ENCODE measurements at regions of chr20 and their contacts with region 1.

Region 1: GRCh38 chr20:20824924-20825584 is 112.6 kb upstream of the RALGAPA2 start:
- DNase-seq: peak; percentile 26
- H3K4me3 Mint-ChIP-seq: no peak overlapping the region
- H3K27ac Mint-ChIP-seq: no peak overlapping the region
- H3K4me1 Mint-ChIP-seq: no peaks in the 10 kb centered on the region
- H3K27me3 Mint-ChIP-seq: peaks cover 10% of the 10 kb centered on the region

Region 2: GRCh38 chr20:20664795-20665589 is 160.1 kb before region 1 on chr20:
- intact Hi-C with region 1: loop called (anchors 1 kb)
- DNase-seq: no peak
- H3K4me3 Mint-ChIP-seq: no peak overlapping the region
- H3K27ac Mint-ChIP-seq: no peak overlapping the region
- H3K4me1 Mint-ChIP-seq: peaks cover 13% of the 10 kb centered on the region
- H3K27me3 Mint-ChIP-seq: no peaks in the 10 kb centered on the region

Region 3: GRCh38 chr20:21225215-21225947 is 400.3 kb after region 1 on chr20:
- intact Hi-C with region 1: no loop called
- DNase-seq: no peak
- H3K4me3 Mint-ChIP-seq: no peak overlapping the region
- H3K27ac Mint-ChIP-seq: no peak overlapping the region
- H3K4me1 Mint-ChIP-seq: no peaks in the 10 kb centered on the region
- H3K27me3 Mint-ChIP-seq: no peaks in the 10 kb centered on the region

Measured in activated T-helper 2 cell treated with anti-CD3 and anti-CD28 coated beads, Interferon-gamma antibody, Interleukin-2, Interleukin-4, amounts not matched to agents 10 μg/mL and 5 μg/mL and 100 μg/mL, durations not matched to agents 14 hours and 24 hours and 36 hours (primary cell).